ENCODE measurements at regions of chr1 and their contacts with region 1.

Region 1: DNA sequence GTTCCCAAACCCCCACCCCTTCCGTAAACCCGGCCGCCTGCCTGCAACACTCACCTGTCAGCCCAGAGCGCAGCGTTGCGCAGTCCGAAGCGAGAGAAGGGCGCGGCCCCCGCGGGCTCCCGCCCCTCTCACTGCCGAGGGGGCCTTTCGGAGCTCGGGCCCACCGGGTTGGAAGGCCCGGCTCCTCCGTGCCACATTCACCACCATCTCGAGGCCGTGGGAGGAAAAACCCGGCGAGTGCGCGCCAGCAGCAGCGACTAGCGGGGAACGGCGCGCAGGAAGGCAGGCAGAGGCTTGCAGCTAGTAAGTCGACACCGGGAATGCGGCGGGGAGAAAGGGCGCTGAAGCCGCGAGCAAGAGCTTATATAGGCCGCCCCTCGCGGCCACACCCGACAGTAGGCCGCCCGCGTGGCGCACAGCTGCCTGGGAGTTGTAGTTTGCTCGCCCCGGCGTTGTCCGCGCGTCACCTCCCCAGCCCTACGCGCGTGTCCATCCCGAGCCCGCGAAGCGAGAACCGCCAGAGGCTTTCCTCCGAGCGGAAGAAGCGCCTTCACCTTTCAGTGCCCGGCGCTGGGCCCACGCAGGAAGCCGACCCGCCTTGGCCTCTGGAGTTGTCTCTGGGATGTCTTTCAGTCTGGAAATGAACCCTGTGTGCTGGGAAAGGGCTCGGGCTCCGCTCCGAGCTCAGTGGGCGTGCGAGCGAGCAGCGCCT is 10.4 kb upstream of the RAB42 start:
- DNase-seq: peak; percentile 91 to 94 (median 93)
- H3K4me3 ChIP-seq: peak overlapping the region; percentile 82 to 99
- H3K4me3 Mint-ChIP-seq: peak overlapping the region; percentile 94 to 99 (median 98)
- H3K27ac ChIP-seq: peak overlapping the region; percentile 82
- H3K27ac Mint-ChIP-seq: peak overlapping the region; percentile 92 to 98 (median 95)
- H3K4me1 ChIP-seq: peaks cover 33% of the 10 kb centered on the region
- H3K4me1 Mint-ChIP-seq: peaks cover 21 to 54% (median 38%) of the 10 kb centered on the region in 4 donors
- H3K27me3 ChIP-seq: no peaks in the 10 kb centered on the region
- H3K27me3 Mint-ChIP-seq: no peaks in the 10 kb centered on the region

Region 2: GRCh38 chr1:28199328-28200233 is 382.1 kb before region 1 on chr1:
- CTCF ChIA-PET with region 1: no interaction called
- POLR2A ChIA-PET with region 1: no interaction called
- intact Hi-C with region 1: no loop called
- DNase-seq: peak; percentile 76 to 82 (median 80)
- H3K4me3 ChIP-seq: no peak overlapping the region
- H3K4me3 Mint-ChIP-seq: peak overlapping the region; percentile 38 to 86 (median 78)
- H3K27ac ChIP-seq: peak overlapping the region; percentile 8
- H3K27ac Mint-ChIP-seq: peak overlapping the region; percentile 43 to 95 (median 84)
- H3K4me1 ChIP-seq: peaks cover 49% of the 10 kb centered on the region
- H3K4me1 Mint-ChIP-seq: peaks cover 29 to 47% (median 41%) of the 10 kb centered on the region in 4 donors
- H3K27me3 ChIP-seq: no peaks in the 10 kb centered on the region
- H3K27me3 Mint-ChIP-seq: no peaks in the 10 kb centered on the region

Region 3: DNA sequence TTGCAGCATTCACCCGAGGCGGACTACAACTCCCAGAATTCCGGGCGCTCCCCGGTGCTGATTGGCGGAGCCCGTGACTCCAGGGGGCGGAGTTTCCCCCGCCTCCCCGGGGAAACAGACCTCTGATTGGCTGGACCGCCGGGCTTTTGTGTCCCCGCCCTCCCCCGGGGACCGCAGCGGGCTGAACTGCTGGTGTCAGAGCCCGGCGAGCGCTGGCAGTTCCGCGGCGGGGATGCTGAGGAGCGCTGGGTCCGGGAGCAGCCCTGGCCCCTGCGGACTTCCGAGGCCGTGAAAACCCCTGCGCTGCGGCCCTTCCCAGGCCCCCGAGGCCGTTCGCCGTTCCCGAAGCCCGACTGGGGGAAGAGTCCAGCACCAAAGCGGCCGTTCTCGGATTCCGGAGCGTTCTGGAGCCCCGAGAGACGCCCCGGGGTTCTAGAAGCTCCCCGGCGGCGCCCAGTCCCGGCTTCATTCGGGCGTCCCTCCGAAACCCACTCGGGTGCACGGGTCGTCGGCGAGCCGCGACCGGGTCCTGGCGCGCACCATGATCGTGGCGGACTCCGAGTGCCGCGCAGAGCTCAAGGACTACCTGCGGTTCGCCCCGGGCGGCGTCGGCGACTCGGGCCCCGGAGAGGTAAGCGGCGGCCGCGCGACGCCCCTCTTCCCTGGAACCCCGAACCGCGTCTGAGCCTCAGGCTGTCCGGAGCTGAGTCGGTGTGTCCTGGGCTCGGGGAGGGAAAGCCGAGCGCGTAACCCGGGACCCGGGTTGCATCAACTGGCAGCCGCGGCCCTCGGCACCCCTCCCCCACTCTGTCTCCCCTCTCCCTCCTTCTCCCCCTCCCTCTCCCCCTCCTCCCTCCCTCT is 322.2 kb before region 1 on chr1 and contains the start of gene SESN2:
- CTCF ChIA-PET with region 1: no interaction called
- POLR2A ChIA-PET with region 1: interaction called, 13 read pairs
- intact Hi-C with region 1: loop called (anchors 1 kb)
- DNase-seq: peak; percentile 99
- H3K4me3 ChIP-seq: peak within 1 kb of the TSS; percentile 69 to 82
- H3K4me3 Mint-ChIP-seq: peak within 1 kb of the TSS; percentile 77 to 90 (median 82)
- H3K27ac ChIP-seq: peak within 1 kb of the TSS; percentile 67
- H3K27ac Mint-ChIP-seq: peak within 1 kb of the TSS; percentile 72 to 88 (median 84)
- H3K4me1 ChIP-seq: peaks cover 59% of the 10 kb centered on the region
- H3K4me1 Mint-ChIP-seq: peaks cover 29 to 58% (median 43%) of the 10 kb centered on the region in 4 donors
- H3K27me3 ChIP-seq: no peaks in the 10 kb centered on the region
- H3K27me3 Mint-ChIP-seq: no peaks in the 10 kb centered on the region
- total RNA-seq, gene SESN2: 5.7 to 6.4 TPM

Region 4: DNA sequence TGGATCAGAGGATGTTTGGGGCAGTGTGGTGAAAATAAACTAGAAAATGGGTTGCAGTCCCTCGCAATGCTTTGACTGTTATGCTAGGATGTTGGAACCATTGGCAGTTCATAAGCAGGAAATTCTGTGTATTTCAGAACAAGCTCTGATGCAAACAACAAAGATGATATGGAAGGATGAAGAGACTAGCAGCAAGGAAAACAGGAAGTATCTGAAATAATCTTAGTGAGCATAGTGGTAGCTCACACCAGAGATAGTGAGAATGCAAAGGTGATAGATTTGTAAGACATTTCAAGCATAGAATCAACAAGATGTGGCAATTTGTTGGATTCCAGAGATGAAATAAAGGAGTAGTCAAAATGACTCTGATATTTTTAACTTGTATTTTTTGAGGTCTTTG is 87.0 kb before region 1 on chr1:
- CTCF ChIA-PET with region 1: no interaction called
- POLR2A ChIA-PET with region 1: no interaction called
- intact Hi-C with region 1: no loop called
- DNase-seq: no peak
- H3K4me3 ChIP-seq: no peak overlapping the region
- H3K4me3 Mint-ChIP-seq: no peak overlapping the region
- H3K27ac ChIP-seq: no peak overlapping the region
- H3K27ac Mint-ChIP-seq: peak overlapping the region in 5 of 7 donors; percentile 5 to 88 (median 83)
- H3K4me1 ChIP-seq: no peaks in the 10 kb centered on the region
- H3K4me1 Mint-ChIP-seq: peaks cover 0 to 5% (median 4%) of the 10 kb centered on the region in 4 donors
- H3K27me3 ChIP-seq: no peaks in the 10 kb centered on the region
- H3K27me3 Mint-ChIP-seq: no peaks in the 10 kb centered on the region

Region 5: GRCh38 chr1:28518000-28518744 is 63.5 kb before region 1 on chr1:
- CTCF ChIA-PET with region 1: interaction called, 12 read pairs
- POLR2A ChIA-PET with region 1: interaction called, 234 read pairs
- intact Hi-C with region 1: loop called (anchors 1 kb)
- DNase-seq: peak; percentile 84 to 87 (median 86)
- H3K4me3 ChIP-seq: peak overlapping the region; percentile 33 to 65
- H3K4me3 Mint-ChIP-seq: peak overlapping the region; percentile 85 to 92 (median 90)
- H3K27ac ChIP-seq: peak overlapping the region; percentile 56
- H3K27ac Mint-ChIP-seq: peak overlapping the region; percentile 67 to 94 (median 85)
- H3K4me1 ChIP-seq: peaks cover 27% of the 10 kb centered on the region
- H3K4me1 Mint-ChIP-seq: peaks cover 15 to 32% (median 21%) of the 10 kb centered on the region in 4 donors
- H3K27me3 ChIP-seq: no peaks in the 10 kb centered on the region
- H3K27me3 Mint-ChIP-seq: no peaks in the 10 kb centered on the region

Region 6: GRCh38 chr1:28591708-28592320 is 10.1 kb after region 1 on chr1 and contains the start of gene RAB42:
- CTCF ChIA-PET with region 1: interaction called, 3 read pairs
- POLR2A ChIA-PET with region 1: interaction called, 42 read pairs
- intact Hi-C with region 1: no loop called
- DNase-seq: peak in 1 of 5 donors; percentile 12
- H3K4me3 ChIP-seq: peak within 1 kb of the TSS in 1 of 2 donors; percentile 19
- H3K4me3 Mint-ChIP-seq: peak within 1 kb of the TSS; percentile 76 to 89 (median 82)
- H3K27ac ChIP-seq: no peak within 1 kb of the TSS
- H3K27ac Mint-ChIP-seq: peak within 1 kb of the TSS in 3 of 7 donors; percentile 47 to 78 (median 57)
- H3K4me1 ChIP-seq: peaks cover 4% of the 10 kb centered on the region
- H3K4me1 Mint-ChIP-seq: peaks cover 0 to 13% (median 4%) of the 10 kb centered on the region in 4 donors
- H3K27me3 ChIP-seq: peaks cover 4% of the 10 kb centered on the region
- H3K27me3 Mint-ChIP-seq: peaks cover 3 to 4% of the 10 kb centered on the region in 2 donors
- total RNA-seq, gene RAB42: 0.38 to 1.3 TPM

Region 7: GRCh38 chr1:28648474-28649198 is 66.9 kb after region 1 on chr1 and contains the start of gene RNU11:
- CTCF ChIA-PET with region 1: interaction called, 17 read pairs
- POLR2A ChIA-PET with region 1: interaction called, 233 read pairs
- intact Hi-C with region 1: loop called (anchors 1 kb)
- DNase-seq: peak; percentile 93 to 95 (median 95)
- H3K4me3 ChIP-seq: peak within 1 kb of the TSS; percentile 55 to 91
- H3K4me3 Mint-ChIP-seq: peak within 1 kb of the TSS; percentile 84 to 94 (median 90)
- H3K27ac ChIP-seq: peak within 1 kb of the TSS; percentile 96
- H3K27ac Mint-ChIP-seq: peak within 1 kb of the TSS; percentile 99 to 100 (median 99)
- H3K4me1 ChIP-seq: peaks cover 31% of the 10 kb centered on the region
- H3K4me1 Mint-ChIP-seq: peaks cover 15 to 36% (median 25%) of the 10 kb centered on the region in 4 donors
- H3K27me3 ChIP-seq: no peaks in the 10 kb centered on the region
- H3K27me3 Mint-ChIP-seq: no peaks in the 10 kb centered on the region
- total RNA-seq, gene RNU11: not detected

Region 8: DNA sequence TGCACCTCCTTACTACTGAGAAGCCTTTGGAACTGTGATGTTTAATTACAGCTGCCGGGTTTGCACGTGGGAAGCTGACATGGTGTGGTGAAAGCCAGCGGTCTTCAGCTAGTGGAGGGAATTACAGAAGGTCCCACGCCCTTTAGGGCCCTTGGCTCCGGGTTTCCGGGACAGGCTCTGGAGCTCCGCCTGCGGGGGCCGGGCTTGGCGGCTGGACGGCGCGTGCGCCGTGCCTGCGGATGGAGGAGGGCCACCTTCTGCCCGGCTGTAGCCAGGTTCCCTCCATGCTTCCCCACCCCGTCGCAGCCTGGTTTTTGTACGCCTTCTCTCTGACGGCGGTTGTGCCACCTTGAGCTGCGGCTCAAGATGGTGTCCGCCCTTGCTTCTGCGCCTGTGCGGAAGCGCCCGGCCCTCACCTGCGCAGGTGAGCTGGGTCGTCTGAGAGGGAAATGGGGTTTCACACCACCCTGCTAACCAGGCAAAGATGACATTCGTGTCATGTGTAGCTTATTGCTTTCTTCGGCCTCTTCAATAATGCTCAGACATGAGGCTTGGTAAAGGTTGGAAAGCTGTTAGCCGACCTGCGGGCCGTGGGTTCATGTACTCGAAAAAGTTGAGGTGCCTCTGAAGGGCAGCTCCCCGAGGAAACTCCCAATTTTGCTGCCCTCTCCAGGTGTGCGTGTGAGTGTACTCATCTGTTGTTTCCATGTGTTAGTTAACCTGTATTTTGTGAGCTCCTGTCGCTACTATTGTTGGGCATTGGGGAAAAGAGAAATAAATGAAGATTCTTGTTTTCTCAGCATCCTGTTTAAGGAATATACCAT is 193.6 kb after region 1 on chr1:
- CTCF ChIA-PET with region 1: no interaction called
- POLR2A ChIA-PET with region 1: interaction called, 15 read pairs
- intact Hi-C with region 1: no loop called
- DNase-seq: peak; percentile 66 to 81 (median 74)
- H3K4me3 ChIP-seq: peak overlapping the region; percentile 8 to 64
- H3K4me3 Mint-ChIP-seq: peak overlapping the region; percentile 81 to 91 (median 85)
- H3K27ac ChIP-seq: peak overlapping the region; percentile 28
- H3K27ac Mint-ChIP-seq: peak overlapping the region; percentile 70 to 93 (median 87)
- H3K4me1 ChIP-seq: peaks cover 6% of the 10 kb centered on the region
- H3K4me1 Mint-ChIP-seq: peaks cover 5 to 13% (median 9%) of the 10 kb centered on the region in 4 donors
- H3K27me3 ChIP-seq: no peaks in the 10 kb centered on the region
- H3K27me3 Mint-ChIP-seq: no peaks in the 10 kb centered on the region

Region 9: DNA sequence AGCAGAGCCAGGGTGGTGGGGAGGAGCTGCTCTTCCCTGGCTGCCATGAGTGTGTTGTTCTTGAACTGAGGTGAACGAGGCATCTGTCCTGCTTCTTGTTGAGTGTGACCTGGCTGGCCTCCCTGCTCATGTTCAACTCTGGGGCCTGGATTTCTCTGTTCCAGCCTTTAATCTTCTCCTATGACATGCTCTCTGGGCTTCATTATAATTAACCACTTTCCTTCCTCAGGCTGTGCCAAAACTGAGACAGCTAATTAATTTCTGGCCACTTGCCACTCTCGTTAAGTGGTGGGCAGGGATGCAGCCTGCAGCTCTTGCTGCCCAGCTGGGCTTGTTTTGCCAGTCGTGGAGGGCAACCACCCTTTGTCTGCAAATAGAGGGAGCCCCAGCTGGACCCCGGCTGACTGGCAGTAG is 253.6 kb after region 1 on chr1:
- CTCF ChIA-PET with region 1: no interaction called
- POLR2A ChIA-PET with region 1: no interaction called
- intact Hi-C with region 1: no loop called
- DNase-seq: no peak
- H3K4me3 ChIP-seq: no peak overlapping the region
- H3K4me3 Mint-ChIP-seq: no peak overlapping the region
- H3K27ac ChIP-seq: no peak overlapping the region
- H3K27ac Mint-ChIP-seq: peak overlapping the region in 1 of 7 donors; percentile 60
- H3K4me1 ChIP-seq: no peaks in the 10 kb centered on the region
- H3K4me1 Mint-ChIP-seq: no peaks in the 10 kb centered on the region
- H3K27me3 ChIP-seq: no peaks in the 10 kb centered on the region
- H3K27me3 Mint-ChIP-seq: peaks cover 6% of the 10 kb centered on the region in 2 donors

Region 10: DNA sequence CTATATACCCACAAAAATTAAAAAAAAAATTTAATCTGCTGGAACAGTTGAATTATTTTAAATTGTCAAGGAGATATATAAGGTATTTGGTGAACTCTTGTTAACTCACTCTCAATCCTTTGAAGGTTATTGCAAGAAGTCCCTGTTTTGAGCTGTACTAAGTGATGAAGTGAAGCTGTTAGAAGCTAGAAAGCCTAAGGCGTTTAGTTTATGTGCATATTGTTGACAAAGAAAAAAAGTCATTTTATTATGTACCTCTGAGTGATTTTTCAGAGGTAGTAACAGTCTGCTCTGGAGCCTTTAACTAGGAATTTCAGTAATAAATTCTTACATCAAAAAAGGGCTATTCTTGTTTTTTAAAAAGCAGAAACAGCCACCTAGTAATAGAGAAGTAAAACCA is 482.4 kb after region 1 on chr1:
- CTCF ChIA-PET with region 1: no interaction called
- POLR2A ChIA-PET with region 1: no interaction called
- intact Hi-C with region 1: no loop called
- DNase-seq: no peak
- H3K4me3 ChIP-seq: no peak overlapping the region
- H3K4me3 Mint-ChIP-seq: no peak overlapping the region
- H3K27ac ChIP-seq: no peak overlapping the region
- H3K27ac Mint-ChIP-seq: peak overlapping the region in 1 of 7 donors; percentile 58
- H3K4me1 ChIP-seq: no peaks in the 10 kb centered on the region
- H3K4me1 Mint-ChIP-seq: peaks cover 0 to 5% (median 5%) of the 10 kb centered on the region in 4 donors
- H3K27me3 ChIP-seq: no peaks in the 10 kb centered on the region
- H3K27me3 Mint-ChIP-seq: no peaks in the 10 kb centered on the region

Measured in CD4-positive, alpha-beta memory T cell (primary cell).